WTC11 (cell line): ENCODE measurements at regions of chr2 and their contacts with region 1.

Region 1: DNA sequence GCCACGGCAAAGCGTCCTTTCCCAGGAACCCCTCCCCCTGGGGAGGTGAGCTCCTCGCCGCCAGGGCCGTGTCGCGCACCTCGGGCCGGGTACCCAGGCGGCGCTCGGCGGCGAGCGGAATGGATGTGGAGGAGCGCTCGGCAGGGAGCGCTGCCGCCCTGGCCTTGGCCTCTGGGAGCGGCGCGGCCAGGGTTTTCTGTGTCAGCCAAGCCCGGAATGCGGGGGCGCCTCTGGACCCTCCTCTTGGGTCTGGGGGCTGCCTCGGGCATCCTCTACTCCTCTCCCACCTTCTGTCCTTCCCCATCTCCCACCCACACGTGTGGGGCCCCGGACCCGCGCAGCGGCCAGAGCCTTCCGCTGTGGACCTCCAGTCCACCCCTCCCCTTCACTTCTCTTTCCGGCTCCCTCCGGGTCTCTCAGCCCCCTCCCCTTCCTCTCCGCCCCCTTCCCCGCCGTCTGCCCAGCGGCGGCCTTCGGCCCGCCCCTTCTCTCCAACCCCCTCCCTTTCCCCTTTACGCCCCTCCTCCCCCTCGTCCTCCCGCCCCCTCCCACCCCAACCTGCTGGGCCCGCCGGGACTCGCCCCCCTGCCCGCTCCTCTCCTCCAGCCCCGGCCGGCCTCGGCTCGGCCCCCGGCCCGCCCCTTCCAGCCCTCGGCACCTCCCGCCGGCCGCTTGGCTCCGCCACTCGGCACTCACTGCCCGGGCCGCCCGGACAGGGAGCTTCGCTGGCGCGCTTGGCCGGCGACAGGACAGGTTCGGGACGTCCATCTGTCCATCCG is at the start of gene MERTK:
- DNase-seq: peak; percentile 91
- ATAC-seq: peak; percentile 84
- H3K4me3 Mint-ChIP-seq: peak within 1 kb of the TSS; percentile 85
- H3K27ac Mint-ChIP-seq: peak within 1 kb of the TSS; percentile 76
- H3K4me1 Mint-ChIP-seq: peaks cover 31% of the 10 kb centered on the region
- H3K27me3 Mint-ChIP-seq: peaks cover 33% of the 10 kb centered on the region
- CTCF ChIP-seq: no peak
- total RNA-seq, gene MERTK: 5.7 to 7.3 TPM (median 6.9 TPM) in 3 replicates

Region 2: DNA sequence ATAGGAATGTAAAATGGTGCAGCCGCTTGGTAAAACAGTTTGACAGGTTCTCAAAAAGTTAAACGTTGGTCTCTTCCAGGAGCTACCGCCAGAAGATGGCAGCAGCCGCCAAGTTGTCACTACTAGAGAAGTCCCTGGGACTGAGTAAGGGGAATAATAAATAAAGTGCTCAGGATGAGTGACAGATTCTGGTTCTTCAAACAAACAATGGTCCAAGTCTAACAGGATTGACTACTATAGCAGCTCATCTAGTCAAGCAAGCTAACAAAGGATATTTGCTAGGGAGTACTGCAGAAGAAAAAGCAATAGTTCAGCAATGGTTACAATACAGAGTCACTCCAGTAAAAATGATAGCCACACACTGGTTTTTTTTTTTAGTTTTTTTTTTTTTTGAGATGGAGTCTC is 10.3 kb before region 1 on chr2:
- CTCF ChIA-PET with region 1: interaction called, 14 read pairs
- POLR2A ChIA-PET with region 1: interaction called, 3 read pairs
- DNase-seq: peak; percentile 73
- ATAC-seq: peak; percentile 14; the same call in 1 of the 2 replicates
- H3K4me3 Mint-ChIP-seq: no peak overlapping the region
- H3K27ac Mint-ChIP-seq: no peak overlapping the region
- H3K4me1 Mint-ChIP-seq: peaks cover under 1% of the 10 kb centered on the region; the same call in 1 of the 2 replicates
- H3K27me3 Mint-ChIP-seq: no peaks in the 10 kb centered on the region; the same call in 1 of the 2 replicates
- CTCF ChIP-seq: no peak

Region 3: DNA sequence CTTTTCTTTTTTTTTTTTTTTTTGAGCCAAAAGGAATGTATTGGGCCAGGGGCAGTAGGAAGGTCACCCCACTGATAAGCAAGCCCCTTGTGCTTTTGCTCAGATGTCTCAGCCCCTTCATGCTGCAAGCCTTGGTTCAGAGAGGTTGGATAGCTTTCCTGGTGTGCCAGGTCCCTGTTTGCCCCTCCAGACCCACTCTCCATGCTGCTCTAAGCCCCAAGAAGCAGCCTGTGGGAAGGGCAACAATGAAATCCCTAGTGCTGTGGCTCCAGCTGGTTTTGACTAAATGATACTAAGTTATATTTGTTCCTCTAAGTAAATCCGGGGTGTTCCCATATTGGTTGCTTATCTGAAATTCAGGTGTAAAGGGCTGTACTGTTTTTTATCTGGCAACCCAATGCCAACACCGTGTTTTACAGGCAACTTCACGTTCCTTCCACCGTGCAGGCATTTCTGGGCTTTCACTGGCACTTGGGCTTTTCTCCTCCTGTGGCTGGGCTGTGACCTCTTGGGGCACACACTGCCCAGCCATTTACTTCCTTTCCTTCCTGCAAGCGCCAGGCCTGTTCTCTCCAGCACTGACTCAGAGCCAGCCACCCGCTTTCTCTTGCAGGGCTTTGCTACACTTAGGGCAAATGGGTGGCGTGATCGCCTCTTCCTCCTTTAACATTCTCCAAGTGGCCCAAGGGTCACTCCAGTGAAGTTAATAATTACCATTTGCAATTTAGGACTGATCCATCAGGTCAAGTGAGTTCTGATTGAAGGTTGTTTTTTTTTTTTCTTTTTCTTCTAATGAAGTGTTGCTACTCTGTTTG is 21.9 kb after region 1 on chr2:
- CTCF ChIA-PET with region 1: interaction called, 12 read pairs
- POLR2A ChIA-PET with region 1: no interaction called
- DNase-seq: no peak
- ATAC-seq: no peak
- H3K4me3 Mint-ChIP-seq: no peak overlapping the region
- H3K27ac Mint-ChIP-seq: no peak overlapping the region
- H3K4me1 Mint-ChIP-seq: peaks cover 7% of the 10 kb centered on the region; the same call in 1 of the 2 replicates
- H3K27me3 Mint-ChIP-seq: no peaks in the 10 kb centered on the region
- CTCF ChIP-seq: no peak

Region 4: GRCh38 chr2:111950236-111950635 is 52.1 kb after region 1 on chr2:
- CTCF ChIA-PET with region 1: no interaction called
- POLR2A ChIA-PET with region 1: no interaction called
- DNase-seq: no peak
- ATAC-seq: no peak
- H3K4me3 Mint-ChIP-seq: no peak overlapping the region
- H3K27ac Mint-ChIP-seq: no peak overlapping the region
- H3K4me1 Mint-ChIP-seq: peaks cover 7% of the 10 kb centered on the region; the same call in 1 of the 2 replicates
- H3K27me3 Mint-ChIP-seq: no peaks in the 10 kb centered on the region
- CTCF ChIP-seq: no peak

Region 5: DNA sequence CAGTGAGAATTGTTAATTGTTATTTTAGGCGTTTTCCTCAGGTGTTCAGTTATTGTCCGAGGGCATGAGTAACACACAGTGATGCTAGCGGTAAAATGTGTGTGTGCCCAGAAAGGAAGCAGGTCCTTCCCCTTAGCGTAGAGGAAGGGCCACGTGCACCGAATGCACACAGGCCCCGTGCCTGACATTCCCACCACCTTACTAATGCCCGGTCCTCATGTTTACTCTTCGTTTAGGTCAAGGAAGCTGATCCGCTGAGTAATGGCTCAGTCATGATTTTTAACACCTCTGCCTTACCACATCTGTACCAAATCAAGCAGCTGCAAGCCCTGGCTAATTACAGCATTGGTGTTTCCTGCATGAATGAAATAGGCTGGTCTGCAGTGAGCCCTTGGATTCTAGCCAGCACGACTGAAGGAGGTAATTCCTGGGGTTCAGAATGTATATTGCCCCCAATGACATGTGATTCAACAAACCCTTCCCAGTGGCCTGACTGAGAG is 77.0 kb after region 1 on chr2:
- CTCF ChIA-PET with region 1: no interaction called
- POLR2A ChIA-PET with region 1: no interaction called
- DNase-seq: no peak
- ATAC-seq: no peak
- H3K4me3 Mint-ChIP-seq: no peak overlapping the region
- H3K27ac Mint-ChIP-seq: 0 out of 2 replicates have a peak overlapping the region, but pooled peaks have one; percentile 8
- H3K4me1 Mint-ChIP-seq: 0 out of 2 replicates have a peak, but pooled peaks cover 2% of the 10 kb centered on the region
- H3K27me3 Mint-ChIP-seq: no peaks in the 10 kb centered on the region
- CTCF ChIP-seq: no peak